Activated CD4-positive, alpha-beta memory T cell treated with anti-CD3 and anti-CD28 coated beads, Interleukin-2, amount 10 ng/mL, durations not matched to agents 7 days and 5 days (primary cell): ENCODE measurements at regions of chr6 and their contacts with region 1.

Region 1: GRCh38 chr6:33454009-33454946 is at the start of gene ZBTB9:
- DNase-seq: peak; percentile 96
- H3K4me3 Mint-ChIP-seq: peak within 1 kb of the TSS; percentile 83
- H3K27ac Mint-ChIP-seq: peak within 1 kb of the TSS; percentile 79
- H3K4me1 Mint-ChIP-seq: peaks cover 25% of the 10 kb centered on the region
- H3K27me3 Mint-ChIP-seq: no peaks in the 10 kb centered on the region
- total RNA-seq, gene ZBTB9: 6.9 to 7.4 TPM

Region 2: DNA sequence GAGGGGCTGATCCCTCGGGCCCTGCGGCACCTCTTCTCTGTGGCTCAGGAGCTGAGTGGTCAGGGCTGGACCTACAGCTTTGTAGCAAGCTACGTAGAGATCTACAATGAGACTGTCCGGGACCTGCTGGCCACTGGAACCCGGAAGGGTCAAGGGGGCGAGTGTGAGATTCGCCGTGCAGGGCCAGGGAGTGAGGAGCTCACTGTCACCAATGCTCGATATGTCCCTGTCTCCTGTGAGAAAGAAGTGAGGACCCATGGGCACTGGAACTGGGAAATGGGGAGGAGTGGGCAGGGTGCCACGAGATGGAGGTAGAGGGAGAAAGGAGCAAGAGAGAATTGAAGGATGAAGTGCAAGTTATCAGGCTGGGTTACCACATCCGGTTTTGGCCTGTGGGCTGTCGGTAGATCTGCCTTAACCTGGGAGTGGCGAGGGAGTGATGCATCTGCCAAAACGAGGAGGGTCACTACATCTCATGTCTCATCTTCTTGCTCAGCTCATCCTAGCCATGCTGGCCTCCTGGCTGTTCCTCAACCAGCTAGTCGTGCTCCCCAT is 48.8 kb before region 1 on chr6:
- CTCF ChIA-PET with region 1: no interaction called
- POLR2A ChIA-PET with region 1: no interaction called
- DNase-seq: peak; percentile 54
- H3K4me3 Mint-ChIP-seq: no peak overlapping the region
- H3K27ac Mint-ChIP-seq: peak overlapping the region; percentile 67
- H3K4me1 Mint-ChIP-seq: peaks cover 43% of the 10 kb centered on the region
- H3K27me3 Mint-ChIP-seq: no peaks in the 10 kb centered on the region

Region 3: DNA sequence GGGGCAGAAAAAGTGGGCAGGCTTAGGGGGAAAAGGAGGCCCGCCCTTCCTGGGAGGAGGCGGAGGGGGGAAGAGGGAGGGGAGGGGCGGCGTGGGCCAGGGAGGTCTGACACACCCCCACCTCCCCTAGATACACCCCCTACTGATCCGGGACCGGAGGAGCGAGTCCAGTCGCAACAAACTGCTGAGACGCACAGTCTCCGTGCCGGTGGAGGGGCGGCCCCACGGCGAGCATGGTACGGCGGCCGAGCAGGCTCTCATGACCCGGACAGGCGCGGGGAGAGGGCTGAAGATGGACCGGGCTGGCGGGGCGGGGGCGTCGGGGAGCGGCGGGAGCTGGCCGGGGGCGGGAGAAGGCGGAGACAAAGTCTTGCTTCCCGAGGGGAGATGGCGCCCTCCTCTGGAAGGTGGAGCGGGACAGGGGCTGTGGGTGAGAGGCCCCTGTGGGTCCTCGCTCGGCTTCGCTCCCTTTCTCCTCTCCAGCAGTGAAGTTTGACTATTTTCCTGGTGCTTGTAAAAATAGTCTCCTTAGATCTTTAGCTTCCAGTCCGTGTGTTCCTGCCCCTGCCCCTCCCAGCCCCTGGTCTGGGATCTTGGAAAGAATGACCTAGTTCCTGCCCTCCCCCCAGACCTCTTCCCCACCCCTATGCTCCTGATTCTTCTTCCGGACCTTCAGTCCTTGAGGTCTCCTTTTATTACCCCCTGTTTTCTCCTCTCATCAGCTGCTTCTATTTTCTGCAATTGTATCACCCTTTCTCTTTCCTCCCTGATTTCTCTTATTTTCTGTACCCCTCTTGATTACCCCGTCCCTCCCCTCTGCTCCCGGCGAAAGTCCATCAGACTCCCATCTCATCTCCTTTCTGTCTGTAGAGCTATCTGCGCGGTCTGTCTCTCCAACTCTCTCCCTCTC is 28.4 kb before region 1 on chr6:
- CTCF ChIA-PET with region 1: interaction called, 4 read pairs
- POLR2A ChIA-PET with region 1: interaction called, 19 read pairs
- DNase-seq: peak; percentile 85
- H3K4me3 Mint-ChIP-seq: peak overlapping the region; percentile 98
- H3K27ac Mint-ChIP-seq: peak overlapping the region; percentile 93
- H3K4me1 Mint-ChIP-seq: peaks cover 75% of the 10 kb centered on the region
- H3K27me3 Mint-ChIP-seq: peaks cover 15% of the 10 kb centered on the region

Region 4: DNA sequence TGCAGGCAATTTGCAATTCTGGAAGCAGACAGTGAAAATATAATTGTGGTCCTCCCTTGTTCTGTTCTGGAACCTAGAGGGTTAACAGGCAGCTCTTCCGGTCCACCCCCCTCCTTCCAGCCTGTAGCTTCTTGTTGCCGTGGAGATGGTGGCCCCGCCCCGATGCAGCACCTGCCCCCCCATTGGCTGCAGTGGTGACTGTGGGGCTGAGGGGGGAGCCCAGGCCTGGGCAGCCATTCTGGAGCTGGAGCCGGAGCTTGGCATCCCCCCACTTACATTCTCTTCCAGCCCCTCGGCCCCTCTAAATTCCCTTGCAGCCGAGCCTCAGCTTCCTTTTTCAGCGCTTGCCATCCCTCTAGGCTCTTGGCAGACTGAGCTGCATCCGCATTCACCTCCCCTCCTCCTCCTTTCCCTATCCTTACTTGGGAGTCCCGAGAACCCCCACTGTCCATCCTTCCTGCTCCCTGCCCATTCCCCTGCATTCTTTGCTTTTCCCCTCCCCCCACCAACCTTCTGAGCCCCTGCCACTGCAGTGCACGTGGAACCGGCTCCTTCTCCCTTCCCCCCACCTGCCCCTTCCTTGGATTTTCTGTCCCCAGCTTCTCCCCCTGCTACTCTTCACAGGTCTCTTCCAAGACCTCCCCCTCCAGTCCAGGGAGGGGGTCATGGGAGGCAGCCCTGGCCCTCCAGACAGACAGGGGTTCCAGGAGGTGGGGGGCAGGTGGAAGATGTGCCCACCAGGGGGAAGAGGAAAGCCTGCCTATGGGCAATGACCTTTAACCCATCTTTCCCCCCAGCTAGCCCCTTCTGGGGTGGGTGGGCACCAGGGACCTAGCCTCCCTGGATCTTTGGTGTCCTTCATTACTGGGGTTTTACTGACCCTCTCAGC is 23.0 kb before region 1 on chr6:
- CTCF ChIA-PET with region 1: interaction called, 4 read pairs
- POLR2A ChIA-PET with region 1: interaction called, 19 read pairs
- DNase-seq: peak; percentile 86
- H3K4me3 Mint-ChIP-seq: peak overlapping the region; percentile 84
- H3K27ac Mint-ChIP-seq: peak overlapping the region; percentile 90
- H3K4me1 Mint-ChIP-seq: peaks cover 65% of the 10 kb centered on the region
- H3K27me3 Mint-ChIP-seq: no peaks in the 10 kb centered on the region

Region 5: DNA sequence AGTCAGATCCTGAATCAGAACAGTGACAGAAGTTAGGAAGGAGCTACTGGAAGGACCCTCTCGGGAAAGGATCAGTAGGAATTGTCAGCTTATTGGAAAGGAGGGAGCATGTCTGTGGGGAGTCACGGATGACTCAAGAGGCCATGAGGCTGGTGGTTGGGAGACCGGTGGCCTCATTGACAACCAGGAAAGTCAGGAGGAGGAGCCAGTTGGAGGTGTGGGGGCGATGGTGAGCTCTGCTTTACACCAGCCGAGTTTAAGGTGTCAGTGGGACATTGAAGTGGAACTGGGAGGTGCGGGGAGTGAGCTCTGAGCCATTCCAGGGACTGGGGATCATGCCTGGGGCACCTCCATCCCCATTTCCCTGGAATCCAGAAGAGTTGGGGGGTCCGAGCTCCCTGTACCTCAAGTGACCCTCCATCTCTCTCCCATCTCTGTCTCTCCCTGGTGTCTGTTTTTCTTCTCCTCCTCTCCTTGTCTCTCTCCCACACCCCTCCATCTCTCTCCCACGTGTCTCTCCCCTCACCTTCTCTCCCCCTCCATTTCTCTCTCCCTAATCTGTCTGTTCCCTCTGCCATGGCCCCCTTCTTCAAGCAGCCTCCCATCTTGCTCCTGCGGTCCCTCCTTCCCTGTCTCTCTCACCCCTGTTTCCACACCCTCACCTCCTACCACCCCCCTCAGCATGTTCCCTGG is 14.2 kb before region 1 on chr6:
- CTCF ChIA-PET with region 1: interaction called, 8 read pairs
- POLR2A ChIA-PET with region 1: interaction called, 11 read pairs
- DNase-seq: no peak
- H3K4me3 Mint-ChIP-seq: no peak overlapping the region
- H3K27ac Mint-ChIP-seq: no peak overlapping the region
- H3K4me1 Mint-ChIP-seq: no peaks in the 10 kb centered on the region
- H3K27me3 Mint-ChIP-seq: no peaks in the 10 kb centered on the region

Region 6: DNA sequence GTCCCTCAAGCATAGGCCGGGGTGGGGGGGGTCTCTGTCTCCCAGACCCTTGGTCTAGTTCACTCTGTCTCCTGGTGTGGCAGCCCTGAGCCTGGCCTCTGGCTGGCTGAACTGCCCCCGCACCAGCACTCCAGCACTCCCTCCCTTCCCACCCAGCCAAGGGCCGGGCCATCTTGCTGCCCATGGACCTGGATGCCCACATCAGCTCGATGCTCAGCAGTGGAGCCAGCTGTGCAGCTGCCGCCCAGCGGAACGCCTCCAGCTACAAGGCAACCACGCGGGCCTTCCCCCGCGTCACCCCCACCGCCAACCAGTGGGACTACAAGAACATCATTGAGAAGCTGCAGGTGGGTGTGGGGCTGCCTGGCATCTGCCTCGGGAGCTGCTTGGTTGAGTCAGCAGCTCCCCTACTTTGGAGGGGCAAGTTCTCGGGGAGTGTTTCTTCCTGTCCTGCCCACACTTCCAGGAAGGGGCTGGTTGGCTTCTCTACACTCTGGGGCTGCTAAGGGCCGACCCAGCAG is 228.8 kb after region 1 on chr6:
- CTCF ChIA-PET with region 1: no interaction called
- POLR2A ChIA-PET with region 1: no interaction called
- DNase-seq: peak; percentile 58
- H3K4me3 Mint-ChIP-seq: no peak overlapping the region
- H3K27ac Mint-ChIP-seq: peak overlapping the region; percentile 75
- H3K4me1 Mint-ChIP-seq: peaks cover 33% of the 10 kb centered on the region
- H3K27me3 Mint-ChIP-seq: no peaks in the 10 kb centered on the region

Region 7: GRCh38 chr6:33761922-33762629 is 307.8 kb after region 1 on chr6:
- CTCF ChIA-PET with region 1: no interaction called
- POLR2A ChIA-PET with region 1: no interaction called
- DNase-seq: peak; percentile 59
- H3K4me3 Mint-ChIP-seq: no peak overlapping the region
- H3K27ac Mint-ChIP-seq: no peak overlapping the region
- H3K4me1 Mint-ChIP-seq: no peaks in the 10 kb centered on the region
- H3K27me3 Mint-ChIP-seq: no peaks in the 10 kb centered on the region